ENCODE measurements at regions of chr9 and their contacts with region 1.

Region 1: GRCh38 chr9:33778700-33779351 is 16.5 kb upstream of the PRSS3 start:
- DNase-seq: peak; percentile 26
- ATAC-seq: peak; percentile 95
- H3K4me3 ChIP-seq: no peak overlapping the region
- H3K27ac ChIP-seq: no peak overlapping the region
- H3K4me1 ChIP-seq: no peaks in the 10 kb centered on the region
- H3K27me3 ChIP-seq: no peaks in the 10 kb centered on the region
- CTCF ChIP-seq: peak; percentile 73 to 85 (median 77)
- EP300 ChIP-seq: no peak
- POLR2A ChIP-seq: no peak
- RAD21 ChIP-seq: peak; percentile 50

Region 2: DNA sequence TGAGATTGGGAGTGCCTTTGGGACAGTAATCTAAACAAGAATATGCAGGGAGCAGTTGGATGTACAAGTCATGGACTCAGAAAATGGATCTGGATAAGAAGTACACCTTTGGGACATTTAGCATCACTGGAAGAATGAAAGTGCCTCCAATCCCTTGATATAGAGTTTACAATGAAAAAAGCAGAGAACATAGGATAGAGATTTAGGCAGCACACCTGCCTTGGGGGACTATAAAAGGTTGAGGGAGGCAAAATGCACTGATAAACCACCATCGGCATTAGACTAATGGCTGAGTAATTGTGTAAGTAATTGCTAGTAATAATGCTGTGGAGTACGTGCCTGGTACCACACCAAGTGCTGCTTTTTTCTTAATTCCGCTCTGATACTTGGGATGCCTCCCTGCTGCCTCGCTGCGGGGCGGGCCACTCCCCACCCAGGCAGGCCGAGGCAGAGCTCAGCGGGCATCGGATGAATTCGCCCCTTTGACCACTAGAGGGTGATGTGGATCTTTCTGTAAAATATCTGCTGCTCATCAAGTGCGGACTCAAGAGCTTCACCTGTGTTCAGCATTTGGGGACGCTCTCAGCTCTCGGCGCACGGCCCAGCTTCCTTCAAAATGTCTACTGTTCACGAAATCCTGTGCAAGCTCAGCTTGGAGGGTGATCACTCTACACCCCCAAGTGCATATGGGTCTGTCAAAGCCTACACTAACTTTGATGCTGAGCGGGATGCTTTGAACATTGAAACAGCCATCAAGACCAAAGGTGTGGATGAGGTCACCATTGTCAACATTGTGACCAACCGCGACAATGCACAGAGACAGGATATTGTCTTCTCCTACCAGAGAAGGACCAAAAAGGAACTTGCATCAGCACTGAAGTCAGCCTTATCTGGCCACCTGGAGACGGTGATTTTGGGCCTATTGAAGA is 154.9 kb before region 1 on chr9:
- CTCF ChIA-PET with region 1: interaction called, 25 read pairs
- POLR2A ChIA-PET with region 1: no interaction called
- RAD21 ChIA-PET with region 1: interaction called, 9 read pairs
- SMC1A ChIA-PET with region 1: interaction called, 7 read pairs
- in situ Hi-C with region 1: no loop called
- intact Hi-C with region 1: no loop called
- DNase-seq: peak; percentile 34
- ATAC-seq: peak; percentile 99
- H3K4me3 ChIP-seq: no peak overlapping the region
- H3K27ac ChIP-seq: no peak overlapping the region
- H3K4me1 ChIP-seq: no peaks in the 10 kb centered on the region
- H3K27me3 ChIP-seq: peaks cover 0 to under 1% of the 10 kb centered on the region in 2 experiments; a peak in 1 of 4 replicates
- CTCF ChIP-seq: peak; percentile 83 to 88 (median 83)
- EP300 ChIP-seq: no peak
- POLR2A ChIP-seq: no peak
- RAD21 ChIP-seq: peak; percentile 89

Region 3: GRCh38 chr9:33737811-33738606 is 40.8 kb before region 1 on chr9:
- CTCF ChIA-PET with region 1: interaction called, 19 read pairs
- POLR2A ChIA-PET with region 1: no interaction called
- RAD21 ChIA-PET with region 1: interaction called, 7 read pairs
- SMC1A ChIA-PET with region 1: interaction called, 11 read pairs
- in situ Hi-C with region 1: no loop called
- intact Hi-C with region 1: loop called (anchors 1 kb)
- DNase-seq: no peak
- ATAC-seq: peak; percentile 86
- H3K4me3 ChIP-seq: no peak overlapping the region
- H3K27ac ChIP-seq: no peak overlapping the region
- H3K4me1 ChIP-seq: no peaks in the 10 kb centered on the region
- H3K27me3 ChIP-seq: no peaks in the 10 kb centered on the region; a peak in 2 of 4 replicates
- CTCF ChIP-seq: peak; percentile 54 to 66 (median 56)
- EP300 ChIP-seq: no peak
- POLR2A ChIP-seq: no peak
- RAD21 ChIP-seq: peak; percentile 53

Region 4: GRCh38 chr9:33791117-33791516 is 12.3 kb after region 1 on chr9:
- CTCF ChIA-PET with region 1: interaction called, 16 read pairs
- POLR2A ChIA-PET with region 1: no interaction called
- RAD21 ChIA-PET with region 1: no interaction called
- SMC1A ChIA-PET with region 1: no interaction called
- in situ Hi-C with region 1: no loop called
- intact Hi-C with region 1: no loop called
- DNase-seq: no peak
- ATAC-seq: no peak
- H3K4me3 ChIP-seq: no peak overlapping the region
- H3K27ac ChIP-seq: no peak overlapping the region
- H3K4me1 ChIP-seq: no peaks in the 10 kb centered on the region
- H3K27me3 ChIP-seq: no peaks in the 10 kb centered on the region
- CTCF ChIP-seq: no peak
- EP300 ChIP-seq: no peak
- POLR2A ChIP-seq: no peak
- RAD21 ChIP-seq: no peak

Measured in GM12878 (cell line).